ENCODE measurements at regions of chr17 and their contacts with region 1.

Region 1: GRCh38 chr17:74864866-74865395 is 5.2 kb upstream of the GRIN2C start:
- DNase-seq: peak; percentile 65 to 85 (median 75)
- ATAC-seq: peak in 3 of 4 donors; percentile 54 to 77 (median 64)
- H3K4me3 ChIP-seq: no peak overlapping the region
- H3K27ac ChIP-seq: no peak overlapping the region
- H3K4me1 ChIP-seq: peaks cover 8 to 29% (median 17%) of the 10 kb centered on the region in 12 donors
- H3K27me3 ChIP-seq: peaks cover 13 to 26% (median 18%) of the 10 kb centered on the region in 9 donors
- CTCF ChIP-seq: peak; percentile 90 to 98 (median 96)
- POLR2A ChIP-seq: no peak

Region 2: GRCh38 chr17:74659898-74660297 is 205.0 kb before region 1 on chr17:
- intact Hi-C with region 1: loop called in 8 of 10 experiments (anchors 5 to 10 kb)
- DNase-seq: no peak
- ATAC-seq: no peak
- H3K4me3 ChIP-seq: no peak overlapping the region
- H3K27ac ChIP-seq: no peak overlapping the region
- H3K4me1 ChIP-seq: peaks cover 0 to 3% (median 0%) of the 10 kb centered on the region in 12 donors
- H3K27me3 ChIP-seq: peaks cover 0 to 78% (median 25%) of the 10 kb centered on the region in 9 donors
- CTCF ChIP-seq: no peak
- POLR2A ChIP-seq: no peak

Region 3: DNA sequence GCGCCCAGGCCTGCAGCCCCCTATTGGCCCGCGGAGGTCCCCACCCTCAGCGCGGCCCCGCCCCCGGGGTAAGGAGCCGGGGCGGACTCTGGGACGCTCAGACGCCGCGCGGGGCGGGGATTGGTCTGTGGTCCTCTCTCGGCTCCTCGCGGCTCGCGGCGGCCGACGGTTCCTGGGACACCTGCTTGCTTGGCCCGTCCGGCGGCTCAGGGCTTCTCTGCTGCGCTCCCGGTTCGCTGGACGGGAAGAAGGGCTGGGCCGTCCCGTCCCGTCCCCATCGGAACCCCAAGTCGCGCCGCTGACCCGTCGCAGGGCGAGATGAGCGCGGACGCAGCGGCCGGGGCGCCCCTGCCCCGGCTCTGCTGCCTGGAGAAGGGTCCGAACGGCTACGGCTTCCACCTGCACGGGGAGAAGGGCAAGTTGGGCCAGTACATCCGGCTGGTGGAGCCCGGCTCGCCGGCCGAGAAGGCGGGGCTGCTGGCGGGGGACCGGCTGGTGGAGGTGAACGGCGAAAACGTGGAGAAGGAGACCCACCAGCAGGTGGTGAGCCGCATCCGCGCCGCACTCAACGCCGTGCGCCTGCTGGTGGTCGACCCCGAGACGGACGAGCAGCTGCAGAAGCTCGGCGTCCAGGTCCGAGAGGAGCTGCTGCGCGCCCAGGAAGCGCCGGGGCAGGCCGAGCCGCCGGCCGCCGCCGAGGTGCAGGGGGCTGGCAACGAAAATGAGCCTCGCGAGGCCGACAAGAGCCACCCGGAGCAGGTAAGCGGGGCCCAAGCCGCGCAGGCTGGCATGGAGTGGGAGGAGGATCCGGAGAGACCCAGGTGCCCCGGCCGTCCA is 116.2 kb before region 1 on chr17 and contains the start of gene NHERF1:
- intact Hi-C with region 1: loop called (anchors 1 to 5 kb)
- DNase-seq: peak in 4 of 5 donors; percentile 95 to 97 (median 96)
- ATAC-seq: peak; percentile 91 to 97 (median 96)
- H3K4me3 ChIP-seq: peak within 1 kb of the TSS; percentile 69 to 100 (median 95)
- H3K27ac ChIP-seq: peak within 1 kb of the TSS in 11 of 12 donors; percentile 69 to 92 (median 85)
- H3K4me1 ChIP-seq: peaks cover 2 to 85% (median 40%) of the 10 kb centered on the region in 12 donors
- H3K27me3 ChIP-seq: no peaks in the 10 kb centered on the region
- CTCF ChIP-seq: peak in 6 of 12 donors; percentile 1 to 21 (median 10)
- POLR2A ChIP-seq: peak; percentile 83 to 100
- total RNA-seq, gene NHERF1: 11.6 to 42.2 (median 19.2) TPM

Region 4: DNA sequence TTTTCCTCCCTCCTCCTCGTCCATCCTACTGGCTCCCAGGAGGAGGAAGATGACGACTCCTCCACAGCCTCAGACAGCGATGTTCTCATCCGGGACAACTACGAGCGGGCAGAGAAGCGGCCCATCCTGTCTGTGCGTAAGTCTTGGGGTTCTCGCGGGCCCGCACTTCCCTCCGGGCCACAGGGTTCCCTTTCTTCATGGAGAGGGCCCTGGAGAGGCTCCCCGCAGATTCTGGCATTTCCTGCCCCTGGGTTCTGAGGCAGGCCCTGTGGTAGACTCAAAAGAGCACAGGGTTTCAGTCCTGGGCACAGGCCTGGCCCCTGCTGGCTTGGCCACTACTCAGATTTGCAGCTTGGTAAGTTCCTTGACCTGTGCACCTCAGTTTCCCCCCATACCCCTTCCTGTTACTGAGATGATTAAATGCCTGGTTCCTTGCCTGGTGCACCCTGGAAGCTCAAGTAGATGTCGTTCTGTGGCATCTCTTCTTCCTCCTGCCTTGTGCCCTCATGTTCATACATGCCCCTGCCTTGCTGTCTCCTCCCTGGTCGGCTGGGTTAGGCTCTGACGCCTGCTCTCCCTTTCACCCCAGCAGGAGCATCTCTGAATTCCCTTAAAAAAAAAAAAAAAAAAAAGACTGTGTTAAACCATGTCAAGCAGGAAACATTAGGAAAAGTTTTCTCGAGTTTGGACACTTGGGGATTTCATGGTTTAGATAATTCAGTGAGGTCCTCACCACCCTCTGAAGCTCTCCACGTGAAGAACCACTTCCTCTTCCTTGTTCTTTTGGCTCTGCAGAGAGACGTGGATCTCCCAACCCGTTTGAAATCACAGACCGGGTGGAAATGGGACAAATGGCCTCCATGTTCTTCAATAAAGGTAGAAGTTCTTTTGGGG is 74.5 kb before region 1 on chr17:
- intact Hi-C with region 1: loop called (anchors 1 to 2 kb)
- DNase-seq: no peak
- ATAC-seq: no peak
- H3K4me3 ChIP-seq: no peak overlapping the region
- H3K27ac ChIP-seq: peak overlapping the region in 1 of 12 donors; percentile 55
- H3K4me1 ChIP-seq: peaks cover 0 to 23% (median 0%) of the 10 kb centered on the region in 12 donors
- H3K27me3 ChIP-seq: no peaks in the 10 kb centered on the region
- CTCF ChIP-seq: no peak
- POLR2A ChIP-seq: no peak

Region 5: DNA sequence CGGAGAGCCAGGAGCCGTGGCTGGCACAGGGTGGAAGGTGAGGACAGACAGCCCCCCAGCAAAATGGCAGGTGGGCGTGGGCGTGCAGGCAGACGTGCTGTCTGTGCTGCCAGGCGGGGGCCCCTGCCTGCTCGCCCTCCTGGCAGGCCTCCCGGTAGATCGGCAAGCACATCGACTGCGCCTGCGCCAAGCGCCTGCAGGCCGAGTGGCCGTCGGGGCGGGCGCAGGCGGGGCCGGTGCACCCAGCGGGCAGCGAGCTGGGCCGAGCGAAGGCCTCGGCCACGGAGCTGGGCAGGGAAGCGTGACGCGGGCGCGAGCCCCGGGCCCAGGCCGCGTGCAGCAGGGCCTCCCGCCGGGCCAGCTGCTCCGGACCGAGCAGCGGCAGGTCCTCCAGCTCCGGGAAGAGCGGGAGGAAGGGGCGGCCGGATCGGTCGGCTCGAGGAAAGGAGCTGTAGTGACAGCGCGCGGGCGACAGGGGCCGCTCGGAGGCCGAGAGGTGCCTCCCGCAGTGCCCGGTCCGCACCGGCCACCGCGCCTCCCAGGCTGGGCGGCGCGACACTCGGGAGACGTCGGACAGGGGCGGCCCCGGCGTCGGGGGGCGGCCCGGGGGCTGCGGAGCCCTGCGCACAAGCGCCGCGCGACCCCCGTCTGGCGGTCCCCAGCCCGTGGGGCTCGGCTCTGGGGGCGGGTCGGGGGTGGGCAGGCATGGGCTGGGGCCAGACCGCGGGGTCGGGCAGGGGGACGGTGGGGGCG is 22.2 kb before region 1 on chr17:
- intact Hi-C with region 1: loop called in 1 of 10 experiments (anchors 1 kb)
- DNase-seq: peak; percentile 76 to 89 (median 81)
- ATAC-seq: peak; percentile 19 to 84 (median 66)
- H3K4me3 ChIP-seq: peak overlapping the region in 10 of 12 donors; percentile 27 to 57 (median 48)
- H3K27ac ChIP-seq: peak overlapping the region in 6 of 12 donors; percentile 2 to 78 (median 28)
- H3K4me1 ChIP-seq: peaks cover 6 to 32% (median 25%) of the 10 kb centered on the region in 12 donors
- H3K27me3 ChIP-seq: peaks cover 0 to 9% (median 0%) of the 10 kb centered on the region in 9 donors
- CTCF ChIP-seq: peak; percentile 38 to 79 (median 60)
- POLR2A ChIP-seq: peak in 1 of 2 donors; percentile 30

Measured in heart left ventricle (tissue), 16 donors.